MCF 10A (cell line): ENCODE measurements at regions of chr1 and their contacts with region 1.

Region 1: DNA sequence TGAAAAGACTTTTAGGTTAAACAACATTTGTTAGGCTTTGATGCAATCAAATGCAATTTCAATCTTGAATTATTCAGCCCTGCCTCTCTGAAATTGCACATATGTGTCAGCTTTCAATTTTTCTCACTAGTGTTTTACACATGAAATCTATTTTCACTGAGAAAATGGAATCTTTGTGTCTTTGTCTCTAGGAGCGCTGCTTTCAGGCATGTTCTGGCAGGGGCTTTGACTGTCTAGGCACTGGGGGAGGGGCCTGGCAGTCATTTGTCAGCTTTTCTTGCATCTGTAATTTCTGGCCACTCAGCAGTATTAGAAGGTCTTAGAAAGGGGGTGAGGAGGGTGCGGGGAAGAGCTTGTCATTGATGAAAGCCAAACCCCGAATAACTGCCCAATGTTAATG is 264.4 kb downstream of the PTPRC start:
- DNase-seq: peak; percentile 66
- H3K4me3 Mint-ChIP-seq: peak overlapping the region; percentile 54
- H3K27ac Mint-ChIP-seq: peak overlapping the region; percentile 94
- H3K4me1 Mint-ChIP-seq: peaks cover 64% of the 10 kb centered on the region
- H3K27me3 Mint-ChIP-seq: no peaks in the 10 kb centered on the region
- CTCF ChIP-seq: no peak

Region 2: GRCh38 chr1:198880818-198881597 is 22.2 kb before region 1 on chr1:
- CTCF ChIA-PET with region 1: interaction called, 3 read pairs
- POLR2A ChIA-PET with region 1: interaction called, 12 read pairs
- intact Hi-C with region 1: no loop called
- DNase-seq: peak; percentile 97
- H3K4me3 Mint-ChIP-seq: peak overlapping the region; percentile 53
- H3K27ac Mint-ChIP-seq: peak overlapping the region; percentile 94
- H3K4me1 Mint-ChIP-seq: peaks cover 47% of the 10 kb centered on the region
- H3K27me3 Mint-ChIP-seq: no peaks in the 10 kb centered on the region
- CTCF ChIP-seq: no peak

Region 3: GRCh38 chr1:198892065-198892464 is 11.1 kb before region 1 on chr1:
- CTCF ChIA-PET with region 1: interaction called, 16 read pairs
- POLR2A ChIA-PET with region 1: interaction called, 53 read pairs
- intact Hi-C with region 1: loop called (anchors 2 kb)
- DNase-seq: no peak
- H3K4me3 Mint-ChIP-seq: no peak overlapping the region
- H3K27ac Mint-ChIP-seq: peak overlapping the region; percentile 81
- H3K4me1 Mint-ChIP-seq: peaks cover 36% of the 10 kb centered on the region
- H3K27me3 Mint-ChIP-seq: no peaks in the 10 kb centered on the region
- CTCF ChIP-seq: no peak

Region 4: DNA sequence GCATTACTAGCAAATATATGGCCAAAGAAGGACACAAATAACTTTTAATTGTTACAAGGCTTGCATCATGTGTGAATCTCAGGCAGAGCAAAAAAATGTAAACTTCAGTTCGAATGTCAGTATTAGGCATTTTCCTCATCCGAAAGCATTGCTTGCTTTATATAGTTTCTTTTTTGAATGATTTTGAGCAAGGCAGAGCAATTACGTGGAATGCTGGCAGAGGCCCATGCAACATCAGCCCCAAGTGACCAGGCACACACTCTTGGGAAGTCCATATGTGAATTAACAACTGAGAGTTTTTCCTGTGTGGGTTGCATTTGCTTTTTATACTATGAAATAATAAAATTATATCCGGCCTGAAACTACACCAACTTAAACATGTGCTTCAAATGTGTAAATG is 10.5 kb after region 1 on chr1:
- CTCF ChIA-PET with region 1: interaction called, 25 read pairs
- POLR2A ChIA-PET with region 1: interaction called, 217 read pairs
- intact Hi-C with region 1: no loop called
- DNase-seq: no peak
- H3K4me3 Mint-ChIP-seq: no peak overlapping the region
- H3K27ac Mint-ChIP-seq: no peak overlapping the region
- H3K4me1 Mint-ChIP-seq: peaks cover 64% of the 10 kb centered on the region
- H3K27me3 Mint-ChIP-seq: no peaks in the 10 kb centered on the region
- CTCF ChIP-seq: no peak

Region 5: GRCh38 chr1:198922638-198923430 is 19.6 kb after region 1 on chr1:
- CTCF ChIA-PET with region 1: interaction called, 25 read pairs
- POLR2A ChIA-PET with region 1: interaction called, 217 read pairs
- intact Hi-C with region 1: no loop called
- DNase-seq: no peak
- H3K4me3 Mint-ChIP-seq: no peak overlapping the region
- H3K27ac Mint-ChIP-seq: peak overlapping the region; percentile 43
- H3K4me1 Mint-ChIP-seq: peaks cover 43% of the 10 kb centered on the region
- H3K27me3 Mint-ChIP-seq: no peaks in the 10 kb centered on the region
- CTCF ChIP-seq: no peak

Region 6: GRCh38 chr1:198929961-198930599 is 26.9 kb after region 1 on chr1:
- CTCF ChIA-PET with region 1: interaction called, 19 read pairs
- POLR2A ChIA-PET with region 1: interaction called, 502 read pairs
- intact Hi-C with region 1: loop called (anchors 2 kb)
- DNase-seq: peak; percentile 78
- H3K4me3 Mint-ChIP-seq: peak overlapping the region; percentile 70
- H3K27ac Mint-ChIP-seq: peak overlapping the region; percentile 98
- H3K4me1 Mint-ChIP-seq: peaks cover 27% of the 10 kb centered on the region
- H3K27me3 Mint-ChIP-seq: no peaks in the 10 kb centered on the region
- CTCF ChIP-seq: no peak

Region 7: DNA sequence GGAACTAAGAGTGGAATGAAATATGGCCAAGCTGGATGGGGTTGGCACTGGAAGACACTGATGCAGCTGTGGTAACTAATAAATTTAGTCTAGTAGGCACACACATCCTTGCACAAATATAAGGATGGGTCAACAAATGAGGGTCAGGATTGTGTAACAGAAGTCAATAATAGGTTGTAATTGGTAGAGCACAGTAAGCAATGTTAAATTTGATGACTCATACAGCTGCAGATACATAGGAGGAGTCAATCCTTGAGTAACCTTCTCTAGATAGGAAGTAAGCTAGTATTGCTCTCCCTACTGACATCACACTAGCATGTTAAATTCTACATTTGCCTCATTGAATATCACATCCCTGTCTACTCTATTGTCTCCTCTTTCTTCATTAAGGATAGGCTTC is 67.7 kb after region 1 on chr1:
- CTCF ChIA-PET with region 1: no interaction called
- POLR2A ChIA-PET with region 1: no interaction called
- intact Hi-C with region 1: no loop called
- DNase-seq: peak; percentile 77
- H3K4me3 Mint-ChIP-seq: no peak overlapping the region
- H3K27ac Mint-ChIP-seq: peak overlapping the region; percentile 32
- H3K4me1 Mint-ChIP-seq: peaks cover 14% of the 10 kb centered on the region
- H3K27me3 Mint-ChIP-seq: no peaks in the 10 kb centered on the region
- CTCF ChIP-seq: no peak